A549 (cell line): ENCODE measurements at regions of chr22 and their contacts with region 1.

Region 1: DNA sequence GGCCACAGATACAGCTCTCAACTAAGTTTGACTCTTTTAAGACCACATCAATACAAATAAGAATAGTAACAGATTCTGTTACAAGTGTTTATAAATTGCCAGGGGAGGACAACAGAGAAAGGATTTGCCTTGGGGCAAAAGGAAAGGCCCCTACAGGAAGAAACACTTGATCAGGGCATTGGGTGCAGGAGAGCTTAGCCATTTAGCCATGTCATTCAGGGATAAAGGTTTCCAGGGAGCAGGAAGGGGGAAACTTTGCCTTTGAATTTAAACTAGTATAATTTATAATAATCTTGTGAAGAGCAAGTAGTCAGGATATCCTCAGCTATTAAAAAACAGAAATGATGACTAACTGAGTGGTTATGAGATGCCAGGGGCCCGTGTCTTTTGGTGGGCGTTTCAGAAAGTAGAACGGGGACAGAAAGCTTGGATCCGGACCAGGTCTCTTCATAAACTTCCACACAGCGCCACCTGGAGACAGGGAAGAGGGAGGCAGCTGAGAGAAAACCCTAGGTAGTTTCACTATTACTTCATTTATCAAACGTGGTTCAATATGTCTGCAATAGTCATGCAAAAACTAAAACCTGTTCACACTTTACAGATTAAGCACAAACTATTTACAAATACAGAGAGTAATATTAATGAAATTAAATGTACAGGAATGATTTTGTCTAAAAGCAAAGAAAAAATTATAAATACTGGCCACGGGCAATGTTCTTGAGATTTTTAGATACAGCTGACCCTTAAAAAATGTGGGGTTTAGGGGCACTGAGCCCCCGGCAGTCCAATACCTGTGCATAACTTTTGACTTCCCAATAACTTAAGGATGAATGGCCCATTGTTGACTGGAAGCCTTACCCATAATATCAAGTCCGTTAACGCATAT is 11.0 kb upstream of the SLC5A4 start:
- DNase-seq: peak; percentile 35 to 60
- ATAC-seq: peak; percentile 64 to 82; a peak in 5 of 6 replicates
- H3K4me3 ChIP-seq: no peak overlapping the region
- H3K27ac ChIP-seq: peak overlapping the region; percentile 28 to 59; a peak in 2 of 6 replicates
- H3K4me1 ChIP-seq: 0 out of 3 replicates have a peak, but pooled peaks cover 3% of the 10 kb centered on the region
- CTCF ChIP-seq: peak; percentile 70
- EP300 ChIP-seq: no peak
- POLR2A ChIP-seq: no peak
- RAD21 ChIP-seq: peak; percentile 63 to 65

Region 2: GRCh38 chr22:31977141-31977841 is 288.8 kb before region 1 on chr22:
- CTCF ChIA-PET with region 1: interaction called, 15 read pairs
- POLR2A ChIA-PET with region 1: no interaction called
- DNase-seq: peak; percentile 71 to 72
- ATAC-seq: peak; percentile 99
- H3K4me3 ChIP-seq: no peak overlapping the region
- H3K27ac ChIP-seq: no peak overlapping the region
- H3K4me1 ChIP-seq: peaks cover 7% of the 10 kb centered on the region; the same call in 1 of the 3 replicates
- CTCF ChIP-seq: peak; percentile 62
- EP300 ChIP-seq: no peak
- POLR2A ChIP-seq: no peak
- RAD21 ChIP-seq: peak; percentile 84 to 93

Region 3: GRCh38 chr22:32249231-32249630 is 16.9 kb before region 1 on chr22:
- CTCF ChIA-PET with region 1: interaction called, 11 read pairs
- POLR2A ChIA-PET with region 1: no interaction called
- DNase-seq: no peak
- ATAC-seq: no peak
- H3K4me3 ChIP-seq: no peak overlapping the region
- H3K27ac ChIP-seq: no peak overlapping the region
- H3K4me1 ChIP-seq: peaks cover 11% of the 10 kb centered on the region
- CTCF ChIP-seq: no peak
- EP300 ChIP-seq: no peak
- POLR2A ChIP-seq: no peak
- RAD21 ChIP-seq: no peak

Region 4: GRCh38 chr22:32255726-32256125 is 10.4 kb before region 1 on chr22:
- CTCF ChIA-PET with region 1: interaction called, 11 read pairs
- POLR2A ChIA-PET with region 1: no interaction called
- DNase-seq: no peak
- ATAC-seq: no peak
- H3K4me3 ChIP-seq: no peak overlapping the region
- H3K27ac ChIP-seq: no peak overlapping the region
- H3K4me1 ChIP-seq: no peaks in the 10 kb centered on the region
- CTCF ChIP-seq: no peak
- EP300 ChIP-seq: no peak
- POLR2A ChIP-seq: no peak
- RAD21 ChIP-seq: no peak

Region 5: GRCh38 chr22:32286290-32286840 is 20.2 kb after region 1 on chr22:
- CTCF ChIA-PET with region 1: interaction called, 10 read pairs
- POLR2A ChIA-PET with region 1: no interaction called
- DNase-seq: no peak
- ATAC-seq: no peak
- H3K4me3 ChIP-seq: no peak overlapping the region
- H3K27ac ChIP-seq: no peak overlapping the region
- H3K4me1 ChIP-seq: no peaks in the 10 kb centered on the region
- CTCF ChIP-seq: no peak
- EP300 ChIP-seq: no peak
- POLR2A ChIP-seq: no peak
- RAD21 ChIP-seq: no peak

Region 6: DNA sequence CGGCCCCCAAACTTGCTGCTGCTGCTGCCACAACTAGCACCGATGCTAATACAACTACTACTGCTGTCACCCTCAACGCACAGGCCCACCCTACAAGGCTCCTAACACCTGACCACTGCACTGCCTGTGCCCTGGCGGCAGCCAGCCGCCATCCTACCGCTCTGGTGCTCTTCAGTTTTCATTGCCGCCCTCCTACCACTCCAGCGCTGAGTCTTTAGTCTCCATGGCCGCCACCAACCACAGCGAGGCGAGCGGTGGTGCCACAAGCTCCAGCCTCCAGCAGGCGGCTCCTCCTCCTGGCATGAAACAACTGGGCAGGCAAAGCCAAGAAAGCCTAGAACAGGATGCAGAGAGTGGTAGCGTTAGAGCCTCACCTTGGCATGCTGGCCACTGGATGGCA is 86.6 kb after region 1 on chr22:
- CTCF ChIA-PET with region 1: no interaction called
- POLR2A ChIA-PET with region 1: no interaction called
- DNase-seq: peak in 1 of 2 experiments; percentile 4
- ATAC-seq: peak in 1 of 2 experiments; percentile 34; a peak in 2 of 6 replicates
- H3K4me3 ChIP-seq: no peak overlapping the region
- H3K27ac ChIP-seq: no peak overlapping the region
- H3K4me1 ChIP-seq: no peaks in the 10 kb centered on the region
- CTCF ChIP-seq: no peak
- EP300 ChIP-seq: no peak
- POLR2A ChIP-seq: no peak
- RAD21 ChIP-seq: no peak